ENCODE measurements at regions of chr19 and their contacts with region 1.

Region 1: GRCh38 chr19:58519355-58520256 is at the start of gene ZBTB45:
- H3K4me3 ChIP-seq: peak within 1 kb of the TSS; percentile 74
- H3K27ac ChIP-seq: peak within 1 kb of the TSS; percentile 94
- H3K4me1 ChIP-seq: peaks cover 10% of the 10 kb centered on the region
- CTCF ChIP-seq: peak; percentile 99

Region 2: DNA sequence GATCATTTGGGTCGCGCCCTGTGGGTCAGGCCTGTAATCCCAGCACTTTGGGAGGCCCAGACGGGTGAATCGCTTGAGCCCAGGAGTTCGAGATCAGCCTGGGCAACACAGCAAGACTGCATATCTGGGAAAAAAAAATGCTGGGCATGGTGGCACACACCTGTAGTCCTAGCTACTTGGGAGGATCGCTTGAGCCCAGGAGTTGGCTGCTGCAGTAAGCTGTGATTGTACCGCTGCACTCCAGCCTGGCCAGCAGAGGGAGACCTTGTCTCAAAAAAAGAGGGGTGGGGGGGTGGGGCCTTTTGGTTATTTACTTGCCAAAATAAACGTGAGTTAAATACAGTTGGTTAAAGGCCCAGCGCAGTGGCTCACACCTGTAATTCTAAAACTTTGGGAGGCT is 300.7 kb before region 1 on chr19:
- CTCF ChIA-PET with region 1: interaction called, 10 read pairs
- POLR2A ChIA-PET with region 1: interaction called, 4 read pairs
- H3K4me3 ChIP-seq: no peak overlapping the region
- H3K27ac ChIP-seq: no peak overlapping the region
- H3K4me1 ChIP-seq: no peaks in the 10 kb centered on the region
- CTCF ChIP-seq: no peak

Region 3: DNA sequence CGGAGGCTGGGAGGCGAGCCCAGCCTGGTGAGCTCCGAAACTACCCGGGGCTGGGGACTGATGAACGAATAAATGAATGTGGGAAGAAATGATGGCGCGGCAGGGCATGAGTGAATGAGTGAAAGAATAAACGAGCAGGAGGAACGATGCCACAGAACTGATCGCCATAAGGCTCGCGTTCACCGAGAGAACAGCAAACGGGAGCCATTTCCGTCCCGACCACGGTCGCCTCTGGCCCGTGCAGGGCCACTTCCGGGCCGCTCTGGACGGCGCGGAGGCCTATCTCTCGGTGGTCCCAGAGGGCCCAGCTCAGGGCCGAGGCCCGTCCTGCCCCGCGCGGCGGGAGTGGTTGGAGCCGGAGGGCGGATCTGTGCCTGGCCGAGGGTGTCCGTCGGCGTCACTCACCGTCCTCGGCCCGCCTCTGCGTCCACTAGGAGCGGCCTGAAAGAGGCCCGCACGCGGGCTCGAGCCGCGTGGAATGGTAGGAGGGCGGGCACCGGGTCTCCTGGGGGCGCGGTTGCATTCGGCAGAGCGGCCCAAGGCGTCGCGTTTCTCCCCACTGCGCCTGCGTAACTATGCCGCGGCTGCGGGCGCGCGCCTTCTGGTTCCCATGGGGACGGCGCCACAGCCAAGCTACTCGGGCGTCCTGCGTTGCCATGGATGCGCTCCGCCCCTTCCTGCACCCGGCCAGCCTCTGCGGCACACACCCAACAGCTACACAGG is 157.2 kb before region 1 on chr19 and contains the start of gene ZNF497:
- CTCF ChIA-PET with region 1: interaction called, 6 read pairs
- POLR2A ChIA-PET with region 1: interaction called, 19 read pairs
- H3K4me3 ChIP-seq: peak within 1 kb of the TSS; percentile 96
- H3K27ac ChIP-seq: peak within 1 kb of the TSS; percentile 85
- H3K4me1 ChIP-seq: no peaks in the 10 kb centered on the region
- CTCF ChIP-seq: peak; percentile 78

Region 4: DNA sequence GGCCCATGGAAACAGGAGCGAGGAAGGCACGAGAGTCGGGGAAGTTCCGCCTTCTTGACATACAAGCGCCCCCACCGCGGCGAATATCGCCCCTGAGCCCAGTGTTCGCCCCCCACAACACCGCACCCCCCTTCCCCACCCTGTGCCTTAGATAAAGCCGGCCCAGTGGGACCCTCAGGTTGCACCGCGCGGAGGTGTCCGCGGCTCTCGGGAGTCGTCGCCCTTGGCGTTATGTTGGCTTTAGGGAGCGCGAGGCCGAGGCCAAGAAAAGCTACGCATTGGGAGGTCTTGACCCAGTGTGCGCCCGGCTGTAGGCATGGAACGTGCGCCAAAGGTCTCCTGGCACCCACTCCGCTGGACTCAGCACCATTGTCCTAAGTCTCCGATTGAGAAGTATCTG is 79.0 kb before region 1 on chr19:
- CTCF ChIA-PET with region 1: no interaction called
- POLR2A ChIA-PET with region 1: no interaction called
- H3K4me3 ChIP-seq: no peak overlapping the region
- H3K27ac ChIP-seq: no peak overlapping the region
- H3K4me1 ChIP-seq: no peaks in the 10 kb centered on the region
- CTCF ChIP-seq: no peak

Region 5: GRCh38 chr19:58475714-58476497 is 43.7 kb before region 1 on chr19 and contains the start of gene ZNF446:
- CTCF ChIA-PET with region 1: interaction called, 10 read pairs
- POLR2A ChIA-PET with region 1: interaction called, 7 read pairs
- H3K4me3 ChIP-seq: peak within 1 kb of the TSS; percentile 75
- H3K27ac ChIP-seq: peak within 1 kb of the TSS; percentile 69
- H3K4me1 ChIP-seq: peaks cover 7% of the 10 kb centered on the region; the same call in 1 of the 2 replicates
- CTCF ChIP-seq: peak; percentile 80

Region 6: DNA sequence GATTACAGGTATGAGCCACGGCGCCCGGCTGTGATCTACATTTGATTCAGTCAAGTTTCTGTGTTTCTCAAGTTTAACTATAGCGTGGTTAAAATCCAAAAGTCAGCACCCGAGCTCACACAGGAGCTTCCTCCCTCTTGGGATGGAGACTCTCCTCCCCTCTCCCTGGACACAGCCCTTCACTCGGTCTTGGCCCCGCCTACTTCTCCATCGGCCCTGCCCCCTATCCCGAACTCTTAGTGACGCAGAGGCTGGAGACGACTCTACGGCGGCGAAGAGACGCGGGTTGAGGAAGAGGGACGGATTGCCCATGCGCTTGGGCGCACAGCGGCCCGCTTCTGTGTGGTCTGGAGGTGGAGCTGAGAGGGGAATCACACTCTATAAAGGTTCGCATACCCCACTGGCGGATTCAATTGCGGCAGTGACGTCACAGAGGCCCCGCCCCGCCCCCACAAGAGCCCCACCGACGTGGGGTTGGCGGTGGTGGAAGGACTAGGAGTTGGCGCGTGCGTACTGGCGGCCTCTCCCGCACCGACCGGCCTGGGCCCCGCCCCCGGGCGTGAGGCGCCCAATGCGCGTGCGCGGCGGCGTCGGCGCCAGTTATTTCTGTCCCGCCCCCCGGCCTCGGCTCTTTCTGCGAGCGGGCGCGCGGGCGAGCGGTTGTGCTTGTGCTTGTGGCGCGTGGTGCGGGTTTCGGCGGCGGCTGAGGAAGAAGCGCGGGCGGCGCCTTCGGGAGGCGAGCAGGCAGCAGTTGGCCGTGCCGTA is 24.4 kb after region 1 on chr19 and contains the start of gene TRIM28:
- CTCF ChIA-PET with region 1: interaction called, 19 read pairs
- POLR2A ChIA-PET with region 1: interaction called, 107 read pairs
- H3K4me3 ChIP-seq: peak within 1 kb of the TSS; percentile 67
- H3K27ac ChIP-seq: peak within 1 kb of the TSS; percentile 99
- H3K4me1 ChIP-seq: peaks cover 13% of the 10 kb centered on the region
- CTCF ChIP-seq: no peak; the same call in 1 of the 2 replicates

Region 7: DNA sequence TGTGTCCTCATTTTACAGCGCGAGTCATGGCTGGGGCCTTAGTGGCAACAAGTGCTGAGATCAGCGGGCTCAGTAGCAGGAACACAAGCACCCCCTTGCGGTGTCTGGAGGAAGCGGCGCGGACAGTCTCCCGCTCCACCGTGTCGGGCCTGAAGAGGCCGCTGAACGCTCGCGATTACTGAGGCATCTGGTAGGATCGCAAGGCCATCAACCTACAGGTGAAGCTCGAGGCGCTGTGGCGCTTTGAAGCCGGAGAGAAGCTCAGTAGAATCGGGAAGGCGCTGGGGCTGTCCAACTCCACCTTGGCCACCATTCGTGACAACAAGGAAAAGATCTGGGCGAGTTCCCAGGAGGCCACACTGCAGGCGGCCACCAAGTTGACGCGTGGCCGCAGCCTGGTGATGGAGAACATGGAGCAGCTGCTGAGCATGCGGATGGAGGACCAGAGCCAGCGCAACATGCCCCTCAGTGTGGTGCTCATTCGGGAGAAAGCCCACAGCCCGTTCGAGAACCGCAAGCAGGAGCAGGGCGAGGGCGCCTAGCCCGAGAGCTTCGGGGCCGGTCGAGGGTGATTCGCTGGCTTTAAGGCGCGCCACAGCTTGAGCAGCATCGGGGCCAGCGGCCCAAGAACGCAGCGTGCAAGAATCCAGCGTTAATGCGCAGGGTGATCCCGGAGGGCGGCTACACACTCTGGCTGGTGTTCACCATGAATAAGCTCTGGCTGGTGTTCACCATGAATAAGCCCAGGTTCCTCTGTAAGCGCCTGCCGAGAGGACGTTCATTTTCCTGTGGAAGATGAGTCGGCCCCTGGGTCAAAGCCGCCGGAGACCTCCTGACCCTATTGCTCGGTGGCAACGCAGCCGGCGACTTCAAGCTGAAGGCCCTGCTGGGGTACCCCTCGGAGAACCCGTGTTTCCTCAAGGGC is 61.9 kb after region 1 on chr19:
- CTCF ChIA-PET with region 1: interaction called, 25 read pairs
- POLR2A ChIA-PET with region 1: interaction called, 11 read pairs
- H3K4me3 ChIP-seq: no peak overlapping the region
- H3K27ac ChIP-seq: no peak overlapping the region
- H3K4me1 ChIP-seq: no peaks in the 10 kb centered on the region
- CTCF ChIP-seq: peak; percentile 63